ENCODE measurements at regions of chr2 and their contacts with region 1.

Region 1: GRCh38 chr2:46857893-46858701 is 57.5 kb downstream of the MCFD2 start:
- DNase-seq: peak; percentile 41 to 62
- H3K4me3 ChIP-seq: no peak overlapping the region
- H3K27ac ChIP-seq: peak overlapping the region; percentile 91
- H3K4me1 ChIP-seq: peaks cover 59% of the 10 kb centered on the region
- H3K27me3 ChIP-seq: no peaks in the 10 kb centered on the region
- CTCF ChIP-seq: no peak

Region 2: GRCh38 chr2:46776687-46777327 is 81.3 kb before region 1 on chr2:
- CTCF ChIA-PET with region 1: no interaction called
- POLR2A ChIA-PET with region 1: no interaction called
- intact Hi-C with region 1: loop called (anchors 5 kb)
- DNase-seq: peak; percentile 34 to 51
- H3K4me3 ChIP-seq: no peak overlapping the region
- H3K27ac ChIP-seq: no peak overlapping the region
- H3K4me1 ChIP-seq: peaks cover 9% of the 10 kb centered on the region
- H3K27me3 ChIP-seq: no peaks in the 10 kb centered on the region
- CTCF ChIP-seq: peak; percentile 85

Region 3: DNA sequence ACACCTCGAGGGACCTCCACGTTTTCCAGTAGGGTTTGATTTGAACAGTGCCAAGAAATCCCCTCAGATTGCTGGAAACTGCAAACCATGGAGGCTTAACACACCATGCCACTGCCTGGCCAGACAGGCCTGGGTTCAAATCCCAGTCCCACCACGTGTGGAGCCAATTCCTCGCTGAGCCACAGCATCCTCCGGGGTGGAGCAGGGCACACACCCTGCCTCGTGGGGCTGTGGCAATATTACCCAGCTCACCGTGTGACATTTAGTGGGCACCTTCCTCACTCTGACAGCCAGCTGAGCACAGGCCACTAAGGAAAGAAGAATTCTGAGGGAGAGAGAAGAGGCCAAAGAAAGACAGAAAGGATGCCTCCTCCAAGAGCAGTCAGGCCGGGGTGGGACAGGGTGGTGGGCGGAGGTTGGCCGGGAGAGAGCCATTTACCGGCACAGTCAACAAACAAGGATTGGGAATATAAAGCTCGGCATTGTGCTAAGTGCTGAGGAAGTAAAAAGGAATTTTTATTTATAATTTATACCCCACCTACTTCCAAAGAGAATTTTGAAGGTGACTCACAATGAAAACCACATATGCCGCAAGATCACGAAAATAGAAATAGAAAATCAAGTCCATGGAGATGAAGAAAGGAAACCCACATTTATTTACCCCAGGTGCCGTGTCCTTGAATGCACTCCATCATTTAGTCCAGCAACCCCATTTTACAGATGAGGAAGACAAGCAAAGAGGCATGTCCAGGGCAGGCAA is 54.0 kb before region 1 on chr2:
- CTCF ChIA-PET with region 1: interaction called, 4 read pairs
- POLR2A ChIA-PET with region 1: no interaction called
- intact Hi-C with region 1: loop called (anchors 1 kb)
- DNase-seq: peak; percentile 53 to 86
- H3K4me3 ChIP-seq: no peak overlapping the region
- H3K27ac ChIP-seq: 0 out of 2 replicates have a peak overlapping the region, but pooled peaks have one; percentile 20
- H3K4me1 ChIP-seq: peaks cover 19% of the 10 kb centered on the region
- H3K27me3 ChIP-seq: no peaks in the 10 kb centered on the region
- CTCF ChIP-seq: no peak

Region 4: GRCh38 chr2:46814149-46814961 is 43.7 kb before region 1 on chr2:
- CTCF ChIA-PET with region 1: no interaction called
- POLR2A ChIA-PET with region 1: no interaction called
- intact Hi-C with region 1: no loop called
- DNase-seq: no peak
- H3K4me3 ChIP-seq: no peak overlapping the region
- H3K27ac ChIP-seq: no peak overlapping the region
- H3K4me1 ChIP-seq: no peaks in the 10 kb centered on the region
- H3K27me3 ChIP-seq: no peaks in the 10 kb centered on the region
- CTCF ChIP-seq: no peak

Region 5: DNA sequence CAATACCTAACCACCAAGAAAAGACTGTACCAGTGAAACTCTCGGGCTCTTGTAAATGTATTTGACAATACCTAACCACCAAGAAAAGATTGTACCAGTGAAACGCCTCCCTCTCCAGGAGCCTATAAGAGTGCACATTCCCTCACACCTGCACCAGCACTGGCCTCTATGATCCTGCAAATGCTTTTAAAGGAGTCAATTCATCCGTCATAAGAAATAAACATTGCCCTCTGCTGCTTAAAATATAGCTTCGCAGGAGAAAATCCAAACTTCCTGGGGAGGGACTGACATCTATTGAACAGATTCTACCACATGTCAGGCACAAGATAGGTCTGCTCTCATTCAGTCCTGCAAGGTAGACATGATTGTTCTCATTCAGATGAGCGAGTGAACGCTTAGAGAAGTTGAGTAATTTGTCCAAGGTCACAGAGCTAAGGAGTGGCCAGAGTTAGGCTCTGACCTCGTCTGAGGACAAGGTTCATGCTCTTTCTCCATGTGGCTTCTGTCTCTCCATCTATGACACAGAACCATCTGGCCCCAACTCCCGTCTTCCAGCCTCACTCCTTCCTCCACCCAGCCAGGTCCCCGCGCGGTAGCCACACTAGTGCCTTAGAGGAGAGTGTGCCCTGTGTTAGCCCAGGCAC is 18.8 kb after region 1 on chr2:
- CTCF ChIA-PET with region 1: no interaction called
- POLR2A ChIA-PET with region 1: interaction called, 17 read pairs
- intact Hi-C with region 1: loop called (anchors 2 kb)
- DNase-seq: peak; percentile 46 to 75
- H3K4me3 ChIP-seq: no peak overlapping the region
- H3K27ac ChIP-seq: no peak overlapping the region
- H3K4me1 ChIP-seq: peaks cover 17% of the 10 kb centered on the region
- H3K27me3 ChIP-seq: no peaks in the 10 kb centered on the region
- CTCF ChIP-seq: peak; percentile 75

Region 6: GRCh38 chr2:47237375-47237821 is 379.3 kb after region 1 on chr2:
- CTCF ChIA-PET with region 1: no interaction called
- POLR2A ChIA-PET with region 1: no interaction called
- intact Hi-C with region 1: no loop called
- DNase-seq: no peak
- H3K4me3 ChIP-seq: no peak overlapping the region
- H3K27ac ChIP-seq: no peak overlapping the region
- H3K4me1 ChIP-seq: peaks cover 22% of the 10 kb centered on the region
- H3K27me3 ChIP-seq: no peaks in the 10 kb centered on the region
- CTCF ChIP-seq: no peak

Measured in PC-9 (cell line).